H1 (cell line): ENCODE measurements at regions of chr1 and their contacts with region 1.

Region 1: DNA sequence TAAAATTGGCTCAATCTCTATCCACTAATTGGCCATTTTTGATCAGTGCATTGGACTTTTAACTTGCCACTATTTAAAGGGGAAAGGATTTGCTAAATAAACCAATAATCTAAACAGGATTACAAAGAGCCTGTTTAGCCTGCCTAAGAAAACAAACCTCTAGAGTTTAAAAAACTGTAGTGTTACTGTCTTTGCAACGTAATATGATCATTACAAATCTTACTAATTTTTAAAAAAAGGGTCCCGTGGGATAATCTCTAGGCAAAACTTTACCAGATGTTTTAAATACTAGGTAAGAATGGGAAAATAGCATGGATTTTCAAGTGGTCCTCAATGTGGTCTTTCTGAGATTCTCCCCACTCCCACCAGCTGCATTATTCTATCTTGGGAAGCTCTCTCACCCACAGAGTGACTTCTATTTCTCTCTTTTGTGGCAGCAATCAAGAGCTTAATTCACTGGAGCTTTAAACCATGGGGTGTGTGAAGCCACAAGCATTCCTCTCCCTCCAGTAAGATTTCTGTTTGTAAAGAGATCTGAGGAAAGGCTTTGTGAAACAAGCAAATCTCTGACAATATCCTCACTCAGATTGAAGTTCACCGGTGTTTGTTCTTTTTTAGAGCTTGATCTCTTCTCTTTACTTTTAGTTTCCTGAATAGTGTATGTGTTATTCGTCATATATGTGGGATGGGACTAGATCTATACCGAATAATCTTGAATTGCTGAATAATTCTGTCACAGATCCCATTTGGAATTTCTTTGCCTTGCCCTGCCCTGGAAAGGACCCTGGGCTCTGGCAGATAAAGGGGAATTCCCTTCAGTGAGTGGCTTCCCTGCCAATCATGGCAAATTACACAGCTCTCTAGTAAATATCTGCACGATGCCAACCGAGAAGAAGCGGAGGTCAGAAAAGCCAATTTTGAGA is 132.2 kb downstream of the TLR5 start:
- DNase-seq: no peak
- H3K4me3 ChIP-seq: peak overlapping the region in 2 of 4 experiments; percentile 9 to 22; a peak in 2 of 8 replicates
- H3K27ac ChIP-seq: no peak overlapping the region; the same call in 1 of the 2 replicates
- H3K4me1 ChIP-seq: peaks cover 0 to 5% (median 2%) of the 10 kb centered on the region in 4 experiments; a peak in 4 of 7 replicates
- H3K27me3 ChIP-seq: no peaks in the 10 kb centered on the region
- CTCF ChIP-seq: no peak
- EP300 ChIP-seq: no peak
- POLR2A ChIP-seq: peak in 1 of 2 experiments; percentile 71; a peak in 2 of 3 replicates
- RAD21 ChIP-seq: no peak

Region 2: DNA sequence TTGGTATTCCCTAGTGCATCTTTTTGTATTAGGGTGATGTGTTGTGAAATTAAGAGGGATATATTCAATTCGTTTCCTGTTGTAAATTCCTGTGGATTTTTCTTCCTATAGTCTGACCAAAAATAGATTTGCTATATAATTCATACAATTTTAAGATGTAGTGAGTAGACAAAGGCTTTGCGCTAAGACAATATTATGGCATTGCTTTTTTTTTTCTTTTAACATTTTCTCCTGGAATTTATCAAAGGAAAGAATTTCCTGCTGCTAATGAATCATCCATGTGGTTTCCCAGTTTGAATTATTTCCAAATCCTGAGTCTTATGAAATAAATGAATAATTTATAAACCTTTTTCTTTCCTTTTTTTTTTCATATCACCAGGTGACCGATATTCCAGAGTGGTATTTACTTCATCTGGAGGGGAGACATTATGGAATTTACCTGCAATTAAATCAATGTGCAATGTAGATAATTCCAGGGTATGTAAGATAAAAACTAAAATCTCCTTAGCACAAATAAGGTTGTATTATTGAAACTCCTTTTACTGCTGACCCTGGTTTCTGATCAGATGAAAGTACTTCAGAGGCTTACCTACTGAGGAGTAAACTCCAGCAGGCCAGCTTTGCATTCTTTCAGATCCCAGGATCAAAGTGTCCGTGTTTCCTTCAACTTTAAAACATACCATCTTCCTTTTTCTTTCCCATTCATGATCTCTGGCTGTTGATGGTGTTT is 16.2 kb before region 1 on chr1:
- CTCF ChIA-PET with region 1: interaction called, 5 read pairs
- POLR2A ChIA-PET with region 1: interaction called, 58 read pairs
- DNase-seq: no peak
- H3K4me3 ChIP-seq: no peak overlapping the region
- H3K27ac ChIP-seq: no peak overlapping the region
- H3K4me1 ChIP-seq: no peaks in the 10 kb centered on the region; a peak in 2 of 7 replicates
- H3K27me3 ChIP-seq: no peaks in the 10 kb centered on the region; a peak in 1 of 7 replicates
- CTCF ChIP-seq: no peak
- EP300 ChIP-seq: no peak
- POLR2A ChIP-seq: no peak
- RAD21 ChIP-seq: no peak

Region 3: DNA sequence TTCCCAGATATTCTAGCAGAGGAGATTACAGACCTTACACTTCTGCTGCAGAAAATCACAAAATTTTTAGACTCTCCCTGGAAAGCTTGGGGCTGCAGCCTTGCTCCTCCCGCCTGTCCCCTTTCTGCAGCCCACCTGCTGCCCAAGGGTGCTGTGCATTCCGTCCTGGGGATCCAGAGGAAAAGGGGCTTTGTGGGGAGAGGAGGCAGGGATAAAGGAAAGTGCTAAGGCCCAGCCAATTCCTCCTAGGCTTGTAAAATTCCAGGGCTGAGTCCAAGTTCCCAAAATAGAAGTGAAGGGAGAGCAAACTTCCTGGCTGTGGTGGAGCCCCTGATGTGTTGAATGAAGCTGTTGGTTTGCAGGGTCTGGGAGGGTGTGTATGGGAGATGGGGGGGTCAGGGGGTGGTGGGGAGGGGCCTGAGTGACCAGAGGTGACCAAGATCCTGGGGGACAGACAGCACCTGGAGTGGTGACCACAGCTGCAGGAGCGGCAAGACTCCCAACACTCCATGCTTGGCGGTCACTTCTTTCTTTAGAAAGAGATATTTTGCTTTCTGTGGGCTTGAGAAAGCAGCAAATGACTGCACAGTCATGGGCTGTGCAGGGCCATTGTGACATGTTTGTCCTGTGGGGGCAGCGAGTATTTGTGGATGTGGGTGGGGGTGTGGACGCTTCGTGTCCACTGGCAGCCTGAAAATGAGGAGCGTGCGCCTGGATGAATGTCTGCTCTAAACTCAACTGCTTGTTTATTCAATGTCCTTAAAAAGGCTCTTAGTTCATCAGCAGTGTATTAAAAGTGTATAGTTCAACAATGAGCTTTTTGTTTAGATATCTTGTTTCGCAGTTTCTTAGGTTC is 63.8 kb after region 1 on chr1:
- CTCF ChIA-PET with region 1: interaction called, 3 read pairs
- POLR2A ChIA-PET with region 1: interaction called, 21 read pairs
- DNase-seq: no peak
- H3K4me3 ChIP-seq: no peak overlapping the region
- H3K27ac ChIP-seq: no peak overlapping the region
- H3K4me1 ChIP-seq: peaks cover 4 to 11% (median 7%) of the 10 kb centered on the region in 4 experiments
- H3K27me3 ChIP-seq: no peaks in the 10 kb centered on the region
- CTCF ChIP-seq: no peak
- EP300 ChIP-seq: no peak
- POLR2A ChIP-seq: no peak
- RAD21 ChIP-seq: no peak

Region 4: GRCh38 chr1:223081181-223081994 is 70.5 kb after region 1 on chr1:
- CTCF ChIA-PET with region 1: interaction called, 5 read pairs
- POLR2A ChIA-PET with region 1: interaction called, 13 read pairs
- DNase-seq: peak; percentile 89 to 90
- H3K4me3 ChIP-seq: no peak overlapping the region
- H3K27ac ChIP-seq: no peak overlapping the region
- H3K4me1 ChIP-seq: peaks cover 0 to 2% (median under 1%) of the 10 kb centered on the region in 4 experiments; a peak in 1 of 7 replicates
- H3K27me3 ChIP-seq: peaks cover 0 to 5% (median 0%) of the 10 kb centered on the region in 4 experiments; a peak in 1 of 7 replicates
- CTCF ChIP-seq: peak; percentile 88 to 97 (median 89)
- EP300 ChIP-seq: no peak
- POLR2A ChIP-seq: no peak
- RAD21 ChIP-seq: peak; percentile 99

Region 5: DNA sequence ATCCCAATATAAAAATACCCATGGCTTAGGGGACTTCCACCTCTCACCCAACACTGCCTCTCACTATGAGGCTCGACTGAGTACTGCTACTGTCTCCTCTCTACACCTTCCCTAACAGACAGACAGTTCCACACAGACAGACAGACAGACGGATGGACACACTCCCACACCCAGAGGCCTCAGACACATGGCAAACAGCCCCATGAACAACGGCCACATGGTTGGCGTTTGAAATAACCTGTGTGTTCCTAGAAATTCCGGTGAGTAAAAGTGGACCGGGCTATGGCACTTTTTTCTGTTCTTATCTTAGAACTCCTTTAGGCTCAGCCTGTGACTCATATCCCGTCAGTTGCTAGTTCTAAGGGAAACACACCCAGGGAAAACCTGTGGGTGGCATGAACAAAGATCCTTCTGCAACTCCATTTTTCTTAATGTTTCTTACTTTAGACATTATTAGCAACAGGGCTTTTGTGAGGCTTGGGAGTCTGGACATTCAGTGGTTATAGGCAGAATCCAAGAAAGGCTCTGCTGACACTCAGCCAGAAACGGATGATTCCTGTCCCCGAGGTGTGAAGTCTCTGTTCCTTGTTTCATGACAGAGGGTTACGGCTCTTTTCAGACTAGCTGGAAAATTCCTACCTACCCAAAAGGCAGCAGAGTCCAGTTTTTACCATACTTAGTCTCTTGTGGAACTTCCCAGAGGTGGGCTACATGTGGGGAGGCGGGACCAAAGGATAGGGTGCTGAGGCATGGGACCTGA is 222.7 kb after region 1 on chr1:
- CTCF ChIA-PET with region 1: no interaction called
- POLR2A ChIA-PET with region 1: no interaction called
- DNase-seq: peak in 1 of 2 experiments; percentile 35
- H3K4me3 ChIP-seq: no peak overlapping the region
- H3K27ac ChIP-seq: no peak overlapping the region
- H3K4me1 ChIP-seq: no peaks in the 10 kb centered on the region
- H3K27me3 ChIP-seq: no peaks in the 10 kb centered on the region
- CTCF ChIP-seq: no peak
- EP300 ChIP-seq: no peak
- POLR2A ChIP-seq: no peak
- RAD21 ChIP-seq: no peak